ENCODE measurements at regions of chr22 and their contacts with region 1.

Region 1: GRCh38 chr22:44819971-44820631 is 67.7 kb downstream of the ARHGAP8 start:
- DNase-seq: no peak
- ATAC-seq: peak; percentile 36
- H3K4me3 ChIP-seq: no peak overlapping the region
- H3K27ac ChIP-seq: no peak overlapping the region
- H3K4me1 ChIP-seq: no peaks in the 10 kb centered on the region
- H3K27me3 ChIP-seq: no peaks in the 10 kb centered on the region
- CTCF ChIP-seq: no peak
- POLR2A ChIP-seq: no peak
- RAD21 ChIP-seq: no peak

Region 2: DNA sequence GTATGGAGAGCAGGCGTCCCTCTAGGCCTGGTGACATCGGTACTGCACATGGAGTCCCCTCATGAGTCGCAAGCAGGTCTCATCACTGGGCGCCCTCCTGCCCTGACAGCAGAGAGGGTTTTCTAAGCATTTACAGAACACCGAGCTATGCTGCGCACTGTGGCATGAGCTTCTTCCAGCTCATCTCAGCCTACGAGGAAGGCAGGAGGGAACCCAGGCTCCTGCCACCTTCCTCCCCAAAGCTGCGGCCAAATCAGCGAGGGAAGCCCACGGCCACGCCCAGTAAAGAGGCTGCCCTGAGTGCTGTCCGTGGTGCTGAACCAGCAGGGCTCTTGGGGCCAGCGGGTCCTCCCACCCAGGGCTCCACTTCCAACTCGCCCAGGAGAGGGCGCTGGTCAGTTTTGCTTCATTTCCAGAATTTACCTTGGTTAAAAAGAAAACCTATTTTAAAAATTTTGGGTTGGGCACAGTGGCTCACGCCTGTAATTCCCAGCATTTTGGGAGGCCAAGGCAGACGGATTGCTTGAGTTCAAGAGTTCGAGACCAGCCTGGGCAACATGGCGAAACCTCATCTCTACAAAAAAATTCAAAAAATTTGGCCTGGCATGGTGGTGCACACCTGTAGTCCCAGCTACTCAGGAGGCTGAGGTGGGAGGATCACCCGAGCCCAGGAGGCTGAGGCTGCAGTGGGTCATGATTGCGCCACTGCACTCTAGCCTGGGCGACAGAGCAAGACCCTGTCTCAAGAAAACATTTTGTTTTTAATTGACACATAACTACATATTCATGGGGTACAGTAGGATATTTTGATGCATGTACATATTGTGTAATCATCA is 155.5 kb after region 1 on chr22:
- CTCF ChIA-PET with region 1: no interaction called
- POLR2A ChIA-PET with region 1: no interaction called
- RAD21 ChIA-PET with region 1: no interaction called
- intact Hi-C with region 1: loop called (anchors 5 kb)
- DNase-seq: peak; percentile 71
- ATAC-seq: peak; percentile 99
- H3K4me3 ChIP-seq: no peak overlapping the region
- H3K27ac ChIP-seq: no peak overlapping the region
- H3K4me1 ChIP-seq: no peaks in the 10 kb centered on the region
- H3K27me3 ChIP-seq: peaks cover 49% of the 10 kb centered on the region
- CTCF ChIP-seq: peak; percentile 85 to 91 (median 86)
- POLR2A ChIP-seq: no peak
- RAD21 ChIP-seq: peak; percentile 89

Region 3: DNA sequence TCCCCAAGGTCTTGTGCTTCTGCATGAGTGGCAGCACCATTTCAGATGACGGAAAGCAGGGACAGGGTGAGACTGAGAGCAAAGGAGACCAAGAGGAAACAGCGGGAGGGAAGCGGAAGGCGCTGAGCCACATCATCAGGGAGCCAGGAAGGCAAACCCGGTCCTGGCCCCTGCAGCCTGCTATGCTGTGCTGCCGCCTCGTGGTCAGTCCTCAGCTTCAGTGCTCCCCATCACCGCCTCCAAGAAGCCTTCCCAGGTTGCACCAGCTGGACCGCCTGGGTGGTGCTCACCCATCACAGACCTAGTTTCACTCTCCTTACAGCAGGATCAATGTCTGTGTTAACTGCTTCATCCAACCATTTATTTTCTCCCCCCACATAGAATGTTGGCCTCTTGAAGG is 262.7 kb after region 1 on chr22:
- CTCF ChIA-PET with region 1: interaction called, 8 read pairs
- POLR2A ChIA-PET with region 1: no interaction called
- RAD21 ChIA-PET with region 1: no interaction called
- intact Hi-C with region 1: loop called (anchors 2 kb)
- DNase-seq: no peak
- ATAC-seq: peak; percentile 61
- H3K4me3 ChIP-seq: no peak overlapping the region
- H3K27ac ChIP-seq: no peak overlapping the region
- H3K4me1 ChIP-seq: peaks cover 0 to 4% of the 10 kb centered on the region in 2 experiments; a peak in 1 of 4 replicates
- H3K27me3 ChIP-seq: no peaks in the 10 kb centered on the region; the same call in 1 of the 2 replicates
- CTCF ChIP-seq: peak; percentile 25 to 50 (median 33); a peak in 4 of 6 replicates
- POLR2A ChIP-seq: no peak
- RAD21 ChIP-seq: peak; percentile 62

Region 4: GRCh38 chr22:45096256-45096907 is 276.3 kb after region 1 on chr22:
- CTCF ChIA-PET with region 1: interaction called, 7 read pairs
- POLR2A ChIA-PET with region 1: no interaction called
- RAD21 ChIA-PET with region 1: interaction called in 1 of 2 experiments, 4 read pairs
- intact Hi-C with region 1: loop called (anchors 5 kb)
- DNase-seq: peak; percentile 47
- ATAC-seq: peak; percentile 96
- H3K4me3 ChIP-seq: no peak overlapping the region
- H3K27ac ChIP-seq: no peak overlapping the region
- H3K4me1 ChIP-seq: no peaks in the 10 kb centered on the region
- H3K27me3 ChIP-seq: no peaks in the 10 kb centered on the region
- CTCF ChIP-seq: peak; percentile 85 to 95 (median 93)
- POLR2A ChIP-seq: no peak
- RAD21 ChIP-seq: peak; percentile 84

Measured in HCT116 (cell line).